Activated CD4-positive, alpha-beta T cell treated with anti-CD3 and anti-CD28 coated beads, Interleukin-2, amount 10 ng/mL, durations not matched to agents 7 days and 5 days (primary cell): ENCODE measurements at regions of chr1 and their contacts with region 1.

Region 1: GRCh38 chr1:162847839-162848453 is 13.0 kb downstream of the CCDC190 start:
- DNase-seq: peak; percentile 83
- H3K4me3 Mint-ChIP-seq: no peak overlapping the region
- H3K27ac Mint-ChIP-seq: no peak overlapping the region
- H3K4me1 Mint-ChIP-seq: no peaks in the 10 kb centered on the region
- H3K27me3 Mint-ChIP-seq: peaks cover 14% of the 10 kb centered on the region

Region 2: DNA sequence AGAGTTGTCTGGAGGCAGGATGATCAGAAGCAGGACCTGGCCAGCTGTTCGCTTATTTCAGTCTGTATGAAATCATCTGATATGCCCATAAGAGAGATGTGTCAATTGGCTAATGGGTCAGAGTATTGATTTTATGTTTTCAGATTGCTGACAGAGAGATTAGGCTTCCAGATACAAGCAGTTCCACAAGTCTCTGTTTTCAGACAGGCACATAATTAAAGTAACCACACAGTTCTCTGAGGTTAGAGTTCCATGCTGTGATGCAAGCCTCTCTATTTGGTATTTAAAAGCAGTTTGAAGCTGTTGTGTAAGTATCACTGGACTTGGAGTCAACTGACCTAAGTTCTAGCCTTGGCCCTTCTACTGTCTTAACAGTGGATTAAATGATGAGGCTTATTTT is 1031.7 kb before region 1 on chr1:
- CTCF ChIA-PET with region 1: no interaction called
- POLR2A ChIA-PET with region 1: interaction called, 13 read pairs
- DNase-seq: no peak
- H3K4me3 Mint-ChIP-seq: no peak overlapping the region
- H3K27ac Mint-ChIP-seq: no peak overlapping the region
- H3K4me1 Mint-ChIP-seq: peaks cover 2% of the 10 kb centered on the region
- H3K27me3 Mint-ChIP-seq: no peaks in the 10 kb centered on the region

Region 3: GRCh38 chr1:162404550-162405160 is 443.3 kb before region 1 on chr1:
- CTCF ChIA-PET with region 1: no interaction called
- POLR2A ChIA-PET with region 1: no interaction called
- DNase-seq: no peak
- H3K4me3 Mint-ChIP-seq: no peak overlapping the region
- H3K27ac Mint-ChIP-seq: no peak overlapping the region
- H3K4me1 Mint-ChIP-seq: no peaks in the 10 kb centered on the region
- H3K27me3 Mint-ChIP-seq: peaks cover 5% of the 10 kb centered on the region

Region 4: DNA sequence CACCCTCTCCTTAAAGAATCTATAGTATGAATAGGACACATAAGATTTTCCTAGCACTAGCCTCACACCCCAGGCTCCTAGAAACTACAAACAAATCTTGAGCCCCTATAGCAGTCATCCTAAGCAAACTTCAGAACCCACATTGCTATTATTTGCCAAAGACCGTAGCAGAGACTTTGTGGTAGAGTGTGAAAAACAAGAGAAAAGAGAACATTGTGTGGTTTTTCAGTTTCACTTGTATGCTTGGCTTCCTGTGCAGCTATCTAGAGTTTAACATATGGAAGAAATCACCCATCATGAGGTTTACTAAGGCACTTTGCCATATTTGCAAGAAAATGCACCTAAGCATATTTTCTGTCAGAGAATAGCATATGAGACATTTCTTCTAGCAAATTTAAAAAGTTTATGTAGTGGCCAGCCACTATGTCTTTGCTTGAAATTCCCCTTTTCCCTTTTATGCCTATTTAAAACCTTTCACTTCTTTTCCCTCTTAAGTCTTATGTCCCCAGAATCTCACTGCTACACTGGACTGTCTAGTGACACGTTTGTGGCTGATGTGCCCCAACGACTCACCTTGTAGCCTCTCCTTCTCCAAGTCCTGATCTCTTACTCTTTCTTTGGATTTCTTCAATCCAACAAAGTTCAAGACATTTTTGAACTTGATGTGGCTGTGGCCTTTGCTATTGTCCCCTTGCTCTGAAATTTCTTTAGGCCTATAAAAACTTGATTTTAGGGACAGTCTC is 12.6 kb before region 1 on chr1:
- CTCF ChIA-PET with region 1: no interaction called
- POLR2A ChIA-PET with region 1: no interaction called
- DNase-seq: no peak
- H3K4me3 Mint-ChIP-seq: no peak overlapping the region
- H3K27ac Mint-ChIP-seq: peak overlapping the region; percentile 42
- H3K4me1 Mint-ChIP-seq: peaks cover 29% of the 10 kb centered on the region
- H3K27me3 Mint-ChIP-seq: peaks cover 17% of the 10 kb centered on the region

Region 5: GRCh38 chr1:162873671-162874666 is 26.0 kb after region 1 on chr1:
- CTCF ChIA-PET with region 1: no interaction called
- POLR2A ChIA-PET with region 1: no interaction called
- DNase-seq: no peak
- H3K4me3 Mint-ChIP-seq: no peak overlapping the region
- H3K27ac Mint-ChIP-seq: no peak overlapping the region
- H3K4me1 Mint-ChIP-seq: no peaks in the 10 kb centered on the region
- H3K27me3 Mint-ChIP-seq: peaks cover 49% of the 10 kb centered on the region